ENCODE measurements at regions of chr12 and their contacts with region 1.

Region 1: DNA sequence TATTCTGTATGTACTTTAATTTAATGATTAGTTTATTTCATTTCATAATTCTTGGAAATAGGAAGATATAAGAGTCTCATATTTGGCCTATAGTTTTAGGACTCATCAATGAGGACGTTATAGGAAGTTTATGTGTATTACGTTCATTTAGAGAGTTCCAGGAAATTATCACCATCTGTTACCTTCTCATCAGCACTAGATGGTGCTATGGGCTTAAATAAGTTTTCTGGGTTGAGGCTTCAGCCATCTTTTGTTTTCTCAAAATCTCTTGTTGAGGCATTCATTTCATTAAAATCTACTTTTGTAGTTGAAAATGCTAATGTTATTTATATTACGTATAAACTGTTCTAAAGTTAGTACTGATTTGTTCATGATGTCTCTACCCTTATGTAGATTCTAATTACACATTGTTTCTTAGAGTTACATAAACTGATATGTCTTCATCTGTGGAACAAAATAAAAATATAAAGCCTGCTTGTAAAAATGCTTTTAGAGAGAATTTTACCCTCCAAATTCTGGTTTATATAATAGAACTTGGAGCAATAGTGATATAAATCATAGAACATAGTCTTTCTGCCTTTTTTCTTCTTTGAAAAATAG is 89.2 kb downstream of the CFAP54 start:
- DNase-seq: no peak
- H3K4me3 ChIP-seq: no peak overlapping the region
- H3K27ac ChIP-seq: no peak overlapping the region
- H3K4me1 ChIP-seq: no peaks in the 10 kb centered on the region
- H3K27me3 ChIP-seq: no peaks in the 10 kb centered on the region
- CTCF ChIP-seq: peak; percentile 32 to 39

Region 2: DNA sequence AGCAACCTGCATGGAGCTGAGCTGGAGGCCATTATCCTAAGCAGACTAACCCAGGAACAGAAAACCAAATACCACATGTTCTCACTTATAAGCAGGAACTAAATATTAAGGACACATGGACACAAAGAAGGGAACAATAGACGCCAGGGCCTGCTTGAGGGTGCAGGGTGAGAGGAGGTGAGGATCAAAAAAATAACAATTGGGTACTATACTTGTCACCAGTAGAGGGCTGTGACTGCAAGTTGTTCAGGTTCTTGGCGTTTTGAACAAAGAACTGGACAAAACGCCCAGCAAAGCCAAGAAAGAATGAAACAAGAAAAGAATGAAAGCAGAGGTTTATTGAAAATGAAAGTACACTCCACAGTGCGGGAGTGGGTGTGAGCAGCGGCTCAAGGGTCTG is 119.9 kb after region 1 on chr12:
- intact Hi-C with region 1: no loop called
- DNase-seq: no peak
- H3K4me3 ChIP-seq: no peak overlapping the region
- H3K27ac ChIP-seq: no peak overlapping the region
- H3K4me1 ChIP-seq: no peaks in the 10 kb centered on the region
- H3K27me3 ChIP-seq: no peaks in the 10 kb centered on the region
- CTCF ChIP-seq: no peak

Region 3: GRCh38 chr12:96985480-96986362 is 407.1 kb after region 1 on chr12:
- intact Hi-C with region 1: loop called (anchors 10 kb)
- DNase-seq: no peak
- H3K4me3 ChIP-seq: peak overlapping the region; percentile 39 to 51
- H3K27ac ChIP-seq: no peak overlapping the region
- H3K4me1 ChIP-seq: peaks cover 0 to 17% (median 9%) of the 10 kb centered on the region in 4 donors
- H3K27me3 ChIP-seq: peaks cover 0 to 15% of the 10 kb centered on the region in 2 donors
- CTCF ChIP-seq: peak; percentile 54 to 65